Posterior cingulate gyrus (tissue), 11 donors: ENCODE measurements at regions of chr1 and their contacts with region 1.

Region 1: GRCh38 chr1:176374967-176375569 is 87.9 kb upstream of the PAPPA2 start:
- DNase-seq: peak; percentile 52 to 95 (median 81)

Region 2: GRCh38 chr1:176691251-176692228 is 316.5 kb after region 1 on chr1:
- intact Hi-C with region 1: loop called (anchors 2 kb)
- DNase-seq: peak in 1 of 10 donors; percentile 14

Region 3: DNA sequence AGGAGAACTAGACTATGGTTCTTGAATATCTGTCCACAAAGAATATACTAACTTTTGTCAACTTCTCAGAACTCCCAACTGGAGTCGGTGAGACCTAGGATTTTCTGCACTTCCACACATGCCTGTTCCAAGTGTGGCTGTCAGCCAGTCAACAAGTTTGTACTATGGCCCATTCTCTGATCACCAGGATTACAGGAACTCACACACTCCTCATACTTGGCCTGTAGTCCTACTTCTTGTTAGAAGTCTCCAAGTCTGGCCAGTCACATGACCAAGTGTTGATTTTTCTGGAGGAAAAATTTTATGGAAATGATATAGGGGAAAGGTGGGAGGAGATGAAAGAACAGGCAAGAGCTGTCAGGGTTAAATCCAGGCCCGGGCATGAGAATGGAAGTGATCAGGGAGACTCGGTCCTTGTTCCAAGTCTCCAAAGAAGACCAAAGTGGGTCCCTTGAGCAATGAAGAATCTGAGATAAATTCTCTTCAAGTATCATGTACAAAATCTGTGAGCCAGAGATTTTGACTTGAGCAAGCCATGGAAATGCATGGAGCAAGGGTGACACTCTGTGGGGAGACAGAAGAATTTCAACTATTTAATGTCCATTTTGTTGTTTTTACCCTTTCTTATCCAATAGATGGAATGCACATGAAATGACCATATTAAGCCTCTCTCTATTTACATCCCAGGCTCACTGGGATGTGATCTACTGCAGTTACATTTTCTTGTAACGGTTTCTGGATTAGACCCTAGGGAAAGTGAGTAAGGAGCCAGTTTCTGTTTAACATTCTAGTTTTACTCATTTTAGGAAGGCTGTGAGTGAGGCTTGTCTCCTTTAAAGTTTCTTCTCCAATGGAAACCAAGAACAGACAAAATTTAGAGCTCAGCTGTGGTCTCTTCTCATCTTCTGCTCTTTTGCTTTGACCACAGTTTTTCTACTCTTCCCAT is 468.6 kb after region 1 on chr1:
- intact Hi-C with region 1: loop called (anchors 2 kb)
- DNase-seq: peak in 5 of 10 donors; percentile 21 to 79 (median 25)